Adrenal gland (tissue), 19 donors: ENCODE measurements at regions of chr3 and their contacts with region 1.

Region 1: GRCh38 chr3:98154686-98155085 is 7.4 kb downstream of the OR5H14 start:
- DNase-seq: no peak
- H3K4me3 ChIP-seq: no peak overlapping the region
- H3K27ac ChIP-seq: no peak overlapping the region
- H3K4me1 ChIP-seq: no peaks in the 10 kb centered on the region
- H3K27me3 ChIP-seq: no peaks in the 10 kb centered on the region
- CTCF ChIP-seq: no peak
- POLR2A ChIP-seq: no peak

Region 2: DNA sequence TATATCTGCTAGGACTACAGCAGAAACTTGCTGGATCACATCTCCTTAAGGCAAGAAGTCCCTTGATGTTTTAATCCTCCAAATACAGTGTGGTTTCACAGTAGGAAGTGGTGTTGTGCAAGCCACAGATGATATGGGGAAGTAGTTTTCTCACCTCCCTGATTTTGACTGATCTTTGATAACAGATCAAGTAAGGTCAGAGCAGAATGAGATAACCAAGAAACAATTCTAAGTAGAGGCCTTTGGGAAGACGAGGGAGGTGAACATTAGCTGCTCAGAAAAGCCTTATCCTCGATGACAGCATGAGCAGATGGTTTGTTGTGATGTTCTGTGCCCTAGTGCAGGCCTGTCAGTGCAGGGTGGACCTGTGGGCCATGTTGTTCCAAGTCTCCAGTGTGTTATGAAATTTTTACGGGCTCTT is 243.7 kb before region 1 on chr3:
- intact Hi-C with region 1: no loop called
- DNase-seq: peak in 1 of 7 donors; percentile 54
- H3K4me3 ChIP-seq: no peak overlapping the region
- H3K27ac ChIP-seq: no peak overlapping the region
- H3K4me1 ChIP-seq: peaks cover 0 to 7% of the 10 kb centered on the region in 2 donors
- H3K27me3 ChIP-seq: no peaks in the 10 kb centered on the region
- CTCF ChIP-seq: no peak
- POLR2A ChIP-seq: no peak

Region 3: GRCh38 chr3:98003306-98003969 is 151.2 kb before region 1 on chr3:
- intact Hi-C with region 1: no loop called
- DNase-seq: no peak
- H3K4me3 ChIP-seq: no peak overlapping the region
- H3K27ac ChIP-seq: no peak overlapping the region
- H3K4me1 ChIP-seq: no peaks in the 10 kb centered on the region
- H3K27me3 ChIP-seq: no peaks in the 10 kb centered on the region
- CTCF ChIP-seq: no peak
- POLR2A ChIP-seq: no peak

Region 4: GRCh38 chr3:98213276-98213675 is 58.6 kb after region 1 on chr3:
- intact Hi-C with region 1: loop called in 1 of 2 experiments (anchors 2 kb)
- DNase-seq: no peak
- H3K4me3 ChIP-seq: no peak overlapping the region
- H3K27ac ChIP-seq: no peak overlapping the region
- H3K4me1 ChIP-seq: no peaks in the 10 kb centered on the region
- H3K27me3 ChIP-seq: no peaks in the 10 kb centered on the region
- CTCF ChIP-seq: no peak
- POLR2A ChIP-seq: no peak

Region 5: GRCh38 chr3:98259707-98260106 is 105.0 kb after region 1 on chr3:
- intact Hi-C with region 1: no loop called
- DNase-seq: no peak
- H3K4me3 ChIP-seq: no peak overlapping the region
- H3K27ac ChIP-seq: no peak overlapping the region
- H3K4me1 ChIP-seq: no peaks in the 10 kb centered on the region
- H3K27me3 ChIP-seq: no peaks in the 10 kb centered on the region
- CTCF ChIP-seq: no peak
- POLR2A ChIP-seq: no peak